ENCODE measurements at regions of chr14 and their contacts with region 1.

Region 1: DNA sequence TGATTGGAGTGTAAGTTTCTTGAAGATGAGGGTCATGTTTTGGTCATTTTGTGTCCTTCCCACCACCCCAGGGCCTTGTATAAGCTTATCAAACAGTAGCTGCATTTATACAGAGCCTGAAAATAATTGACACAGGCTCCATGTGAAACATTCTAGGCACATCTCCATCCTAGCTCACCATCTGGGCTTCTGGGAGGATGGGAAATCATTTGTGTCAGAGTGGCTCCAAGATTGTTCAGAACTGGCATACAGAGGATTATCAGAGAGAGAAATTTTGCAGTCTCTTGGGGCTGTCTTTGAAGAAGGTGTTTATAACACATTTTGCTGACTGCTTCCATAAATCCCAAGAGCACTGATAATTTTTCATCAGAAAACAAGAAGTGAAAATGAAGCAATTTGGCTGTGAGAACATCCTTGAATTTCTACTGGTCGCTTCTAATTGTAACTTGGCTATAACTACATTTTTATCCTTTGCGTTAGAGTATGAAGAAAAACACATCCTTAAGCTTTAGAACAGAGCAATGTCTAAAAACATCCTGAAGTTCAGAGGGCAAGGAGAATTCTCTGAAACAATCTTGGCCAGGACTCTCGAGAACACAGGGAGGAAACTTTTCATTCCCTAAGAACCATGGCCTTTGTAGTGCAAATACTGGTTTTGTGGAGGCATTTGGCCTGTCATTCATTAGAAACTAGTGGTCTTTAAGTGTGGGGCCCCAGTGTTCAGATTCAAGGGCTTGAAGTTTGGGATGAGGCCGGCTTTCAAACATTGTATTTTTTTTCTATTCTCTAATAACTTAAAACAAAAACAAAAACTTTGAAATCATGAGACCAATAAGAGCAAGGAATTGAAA is 151.1 kb downstream of the DACT1 start:
- DNase-seq: no peak
- ATAC-seq: no peak
- H3K4me3 ChIP-seq: no peak overlapping the region
- H3K27ac ChIP-seq: no peak overlapping the region
- H3K4me1 ChIP-seq: no peaks in the 10 kb centered on the region
- H3K27me3 ChIP-seq: no peaks in the 10 kb centered on the region

Region 2: GRCh38 chr14:58663494-58664415 is 125.1 kb before region 1 on chr14:
- intact Hi-C with region 1: loop called in 1 of 2 experiments (anchors 10 kb)
- DNase-seq: no peak
- ATAC-seq: no peak
- H3K4me3 ChIP-seq: no peak overlapping the region
- H3K27ac ChIP-seq: no peak overlapping the region
- H3K4me1 ChIP-seq: peaks cover 0 to 4% of the 10 kb centered on the region in 2 donors
- H3K27me3 ChIP-seq: no peaks in the 10 kb centered on the region

Measured in aorta (tissue), 5 donors.